CD4-positive, alpha-beta memory T cell (primary cell): ENCODE measurements at regions of chr10 and their contacts with region 1.

Region 1: GRCh38 chr10:133309111-133309719 is 501 bp downstream of the ZNF511 start:
- DNase-seq: peak; percentile 92 to 97 (median 94)
- H3K4me3 ChIP-seq: peak overlapping the region in 1 of 2 donors; percentile 87
- H3K4me3 Mint-ChIP-seq: peak overlapping the region; percentile 67 to 83 (median 73)
- H3K27ac ChIP-seq: peak overlapping the region; percentile 97
- H3K27ac Mint-ChIP-seq: peak overlapping the region; percentile 80 to 91 (median 87)
- H3K4me1 ChIP-seq: peaks cover 23% of the 10 kb centered on the region
- H3K4me1 Mint-ChIP-seq: peaks cover 17 to 42% (median 28%) of the 10 kb centered on the region in 4 donors
- H3K27me3 ChIP-seq: no peaks in the 10 kb centered on the region
- H3K27me3 Mint-ChIP-seq: peaks cover 0 to 6% of the 10 kb centered on the region in 2 donors

Region 2: GRCh38 chr10:132700156-132701098 is 608.8 kb before region 1 on chr10:
- CTCF ChIA-PET with region 1: no interaction called
- POLR2A ChIA-PET with region 1: no interaction called
- intact Hi-C with region 1: no loop called
- DNase-seq: no peak
- H3K4me3 ChIP-seq: no peak overlapping the region
- H3K4me3 Mint-ChIP-seq: no peak overlapping the region
- H3K27ac ChIP-seq: no peak overlapping the region
- H3K27ac Mint-ChIP-seq: no peak overlapping the region
- H3K4me1 ChIP-seq: no peaks in the 10 kb centered on the region
- H3K4me1 Mint-ChIP-seq: peaks cover 0 to 2% (median 0%) of the 10 kb centered on the region in 4 donors
- H3K27me3 ChIP-seq: no peaks in the 10 kb centered on the region
- H3K27me3 Mint-ChIP-seq: no peaks in the 10 kb centered on the region

Region 3: DNA sequence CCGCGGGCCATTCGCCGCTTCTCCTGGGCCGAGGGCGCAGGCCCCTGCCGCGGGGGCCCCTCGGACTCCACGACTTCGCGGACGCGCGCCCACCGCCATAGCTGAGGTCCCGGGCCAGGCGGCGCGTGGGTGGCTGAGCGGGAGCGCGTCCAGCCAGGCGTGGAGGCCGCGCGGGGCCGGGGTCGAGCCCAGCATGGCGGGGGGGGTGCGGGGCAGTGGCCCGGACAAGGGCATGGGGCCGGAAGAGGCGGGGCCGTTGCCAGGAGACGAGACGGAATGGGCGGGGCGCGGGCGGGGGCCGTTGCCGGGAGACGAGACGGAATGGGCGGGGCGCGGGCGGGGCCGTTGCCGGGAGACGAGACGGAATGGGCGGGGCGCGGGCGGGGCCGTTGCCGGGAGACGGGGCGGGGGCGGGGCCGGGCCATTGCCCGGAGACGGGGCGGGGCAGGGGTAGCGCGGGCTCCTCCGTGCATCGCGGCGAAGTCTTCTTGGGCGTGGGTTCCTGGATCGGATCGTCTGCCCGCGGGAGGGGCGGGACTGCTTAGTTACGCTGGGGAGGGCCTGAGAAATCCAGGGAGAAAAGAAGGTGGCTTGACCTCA is 47.4 kb before region 1 on chr10:
- CTCF ChIA-PET with region 1: interaction called, 22 read pairs
- POLR2A ChIA-PET with region 1: interaction called, 13 read pairs
- intact Hi-C with region 1: loop called (anchors 1 kb)
- DNase-seq: peak; percentile 75 to 83 (median 78)
- H3K4me3 ChIP-seq: peak overlapping the region in 1 of 2 donors; percentile 46
- H3K4me3 Mint-ChIP-seq: peak overlapping the region; percentile 70 to 79 (median 76)
- H3K27ac ChIP-seq: peak overlapping the region; percentile 83
- H3K27ac Mint-ChIP-seq: peak overlapping the region; percentile 90 to 98 (median 92)
- H3K4me1 ChIP-seq: peaks cover 85% of the 10 kb centered on the region
- H3K4me1 Mint-ChIP-seq: peaks cover 29 to 86% (median 66%) of the 10 kb centered on the region in 4 donors
- H3K27me3 ChIP-seq: no peaks in the 10 kb centered on the region
- H3K27me3 Mint-ChIP-seq: peaks cover 0 to 4% of the 10 kb centered on the region in 2 donors

Region 4: DNA sequence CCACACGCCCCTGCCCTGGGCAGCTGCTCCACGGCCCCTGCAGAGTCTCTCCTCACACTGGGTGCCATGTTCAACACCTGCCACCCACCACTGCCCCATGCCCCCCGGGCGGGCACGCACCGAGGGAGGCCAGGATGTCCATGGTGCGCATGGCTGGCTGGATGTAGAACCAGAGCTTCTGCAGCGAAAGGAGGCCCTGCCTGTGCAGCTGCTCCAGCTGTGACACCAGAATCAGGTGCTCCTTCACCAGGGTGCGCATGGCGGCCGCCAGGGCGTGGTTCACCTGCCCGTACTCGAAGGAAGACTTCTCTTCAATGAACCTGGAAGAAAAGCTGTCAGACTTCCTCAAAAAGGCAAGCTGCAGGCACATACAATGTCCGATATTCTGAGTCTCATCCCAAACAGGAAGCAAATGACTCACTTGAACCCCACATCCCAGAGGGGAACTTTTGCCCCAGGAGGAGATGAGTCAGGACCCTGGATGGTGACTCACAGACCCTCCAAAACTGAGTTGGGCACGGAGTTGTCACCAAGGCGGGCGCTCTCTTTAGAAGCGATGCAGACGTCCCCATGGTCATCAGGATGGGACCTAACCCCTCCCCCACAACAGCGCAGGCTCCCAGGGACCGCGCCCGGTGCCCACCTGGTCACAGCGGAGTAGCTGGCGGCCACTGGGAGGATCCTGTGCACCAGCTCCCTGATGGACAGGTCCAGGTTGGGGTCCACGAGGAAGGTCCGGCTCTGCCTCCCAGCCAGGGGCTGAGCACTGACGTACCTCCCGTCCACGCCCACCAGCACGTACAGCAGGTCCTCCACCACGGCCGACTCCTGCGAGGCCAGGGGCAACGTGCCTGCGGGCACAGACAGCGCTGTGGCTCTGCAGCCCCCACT is 16.1 kb before region 1 on chr10:
- CTCF ChIA-PET with region 1: interaction called, 12 read pairs
- POLR2A ChIA-PET with region 1: interaction called, 4 read pairs
- intact Hi-C with region 1: no loop called
- DNase-seq: no peak
- H3K4me3 ChIP-seq: no peak overlapping the region
- H3K4me3 Mint-ChIP-seq: no peak overlapping the region
- H3K27ac ChIP-seq: no peak overlapping the region
- H3K27ac Mint-ChIP-seq: no peak overlapping the region
- H3K4me1 ChIP-seq: no peaks in the 10 kb centered on the region
- H3K4me1 Mint-ChIP-seq: no peaks in the 10 kb centered on the region
- H3K27me3 ChIP-seq: no peaks in the 10 kb centered on the region
- H3K27me3 Mint-ChIP-seq: no peaks in the 10 kb centered on the region

Region 5: DNA sequence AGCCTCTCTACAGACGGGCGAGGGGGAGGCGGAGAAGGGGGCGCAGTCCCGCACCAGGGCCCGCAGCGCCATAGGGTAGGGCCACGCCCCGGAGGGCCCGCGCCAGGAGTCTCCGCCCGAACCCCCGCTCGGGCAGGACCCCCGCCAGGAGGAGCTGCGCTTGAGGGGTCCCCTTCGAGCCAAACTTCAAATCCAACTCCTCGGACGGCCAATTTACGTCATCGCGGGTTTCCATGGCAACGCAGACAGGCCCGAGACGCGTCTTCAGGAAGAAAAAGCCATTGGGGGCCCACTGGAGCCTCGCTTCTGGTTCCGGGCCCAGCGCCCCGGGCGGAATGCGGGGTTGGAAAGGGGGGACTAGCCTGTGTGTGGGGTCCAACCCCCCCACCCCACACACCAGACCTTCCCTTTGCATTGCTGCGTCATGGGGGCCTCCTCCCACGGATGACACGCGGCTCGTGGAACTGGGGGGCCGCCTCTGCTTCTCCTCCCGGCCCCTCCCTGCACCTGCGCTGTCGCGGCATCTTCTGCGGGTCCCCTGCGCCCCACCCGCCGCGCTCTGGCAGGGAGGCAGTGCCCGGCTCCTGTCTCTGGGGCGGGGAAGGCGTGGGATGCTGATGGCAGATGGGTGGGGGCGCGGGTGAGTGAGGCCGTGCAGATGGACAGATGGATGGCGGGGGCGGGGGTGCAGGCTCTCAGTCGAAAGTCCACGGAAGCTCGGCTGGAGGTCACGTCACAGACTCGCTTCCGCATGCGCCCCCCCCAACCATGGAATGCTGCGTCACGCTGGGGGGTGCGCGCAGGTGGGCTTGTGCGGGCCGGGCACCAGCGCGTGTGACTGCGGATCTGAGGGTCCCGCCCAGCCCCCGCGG is 26.3 kb after region 1 on chr10:
- CTCF ChIA-PET with region 1: no interaction called
- POLR2A ChIA-PET with region 1: interaction called, 13 read pairs
- intact Hi-C with region 1: loop called (anchors 2 kb)
- DNase-seq: peak; percentile 85 to 95 (median 86)
- H3K4me3 ChIP-seq: peak overlapping the region in 1 of 2 donors; percentile 57
- H3K4me3 Mint-ChIP-seq: peak overlapping the region; percentile 69 to 90 (median 78)
- H3K27ac ChIP-seq: peak overlapping the region; percentile 64
- H3K27ac Mint-ChIP-seq: peak overlapping the region in 6 of 7 donors; percentile 90 to 98 (median 94)
- H3K4me1 ChIP-seq: peaks cover 25% of the 10 kb centered on the region
- H3K4me1 Mint-ChIP-seq: peaks cover 0 to 22% (median 3%) of the 10 kb centered on the region in 4 donors
- H3K27me3 ChIP-seq: no peaks in the 10 kb centered on the region
- H3K27me3 Mint-ChIP-seq: peaks cover 0 to 1% of the 10 kb centered on the region in 2 donors

Region 6: GRCh38 chr10:133373104-133373624 is 63.9 kb after region 1 on chr10 and contains the start of gene ECHS1:
- CTCF ChIA-PET with region 1: no interaction called
- POLR2A ChIA-PET with region 1: no interaction called
- intact Hi-C with region 1: loop called (anchors 1 kb)
- DNase-seq: peak; percentile 90 to 95 (median 91)
- H3K4me3 ChIP-seq: peak within 1 kb of the TSS in 1 of 2 donors; percentile 63
- H3K4me3 Mint-ChIP-seq: peak within 1 kb of the TSS; percentile 69 to 86 (median 82)
- H3K27ac ChIP-seq: peak within 1 kb of the TSS; percentile 51
- H3K27ac Mint-ChIP-seq: peak within 1 kb of the TSS in 6 of 7 donors; percentile 13 to 90 (median 78)
- H3K4me1 ChIP-seq: peaks cover 18% of the 10 kb centered on the region
- H3K4me1 Mint-ChIP-seq: peaks cover 2 to 24% (median 14%) of the 10 kb centered on the region in 4 donors
- H3K27me3 ChIP-seq: no peaks in the 10 kb centered on the region
- H3K27me3 Mint-ChIP-seq: no peaks in the 10 kb centered on the region
- total RNA-seq, gene ECHS1: 29.7 to 30.6 TPM